Heart left ventricle (tissue), 16 donors: ENCODE measurements at regions of chr12 and their contacts with region 1.

Region 1: DNA sequence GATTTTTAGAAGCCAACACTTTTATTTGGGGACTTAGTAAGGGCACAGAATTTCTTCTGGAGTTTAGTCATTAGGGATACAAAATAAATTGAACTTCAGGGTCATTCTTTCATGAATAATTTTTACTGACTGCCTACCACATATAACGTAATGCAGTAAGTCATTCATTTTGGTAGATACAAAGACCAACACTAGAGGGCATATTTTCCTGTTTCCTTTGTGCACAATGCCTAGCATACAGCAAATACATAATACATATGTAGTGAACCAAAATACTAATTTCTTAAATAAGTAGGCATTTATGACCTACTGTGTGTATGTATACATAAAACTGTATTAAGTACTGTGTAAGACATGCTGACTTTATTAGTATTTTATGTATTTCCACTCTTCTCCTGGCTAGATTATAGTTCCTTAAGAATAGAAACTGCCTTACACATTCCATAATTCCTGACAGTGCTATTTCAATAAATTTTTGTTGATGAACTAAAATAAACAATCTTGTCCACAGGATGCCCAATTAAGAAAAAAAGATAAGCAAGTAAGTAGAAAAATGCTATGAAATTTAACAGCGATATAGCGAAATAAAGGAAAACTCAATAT is 47.9 kb downstream of the PPP1R12A start:
- DNase-seq: no peak
- ATAC-seq: peak in 2 of 4 donors; percentile 63 to 69
- H3K4me3 ChIP-seq: no peak overlapping the region
- H3K27ac ChIP-seq: no peak overlapping the region
- H3K4me1 ChIP-seq: peaks cover 0 to 90% (median 60%) of the 10 kb centered on the region in 12 donors
- H3K27me3 ChIP-seq: no peaks in the 10 kb centered on the region
- CTCF ChIP-seq: peak; percentile 33 to 66 (median 56)
- POLR2A ChIP-seq: no peak

Region 2: GRCh38 chr12:79547735-79548609 is 339.0 kb before region 1 on chr12:
- intact Hi-C with region 1: no loop called
- DNase-seq: peak in 1 of 5 donors; percentile 34
- ATAC-seq: peak in 3 of 4 donors; percentile 59 to 75 (median 73)
- H3K4me3 ChIP-seq: no peak overlapping the region
- H3K27ac ChIP-seq: peak overlapping the region in 4 of 12 donors; percentile 2 to 8 (median 6)
- H3K4me1 ChIP-seq: peaks cover 0 to 22% (median 6%) of the 10 kb centered on the region in 12 donors
- H3K27me3 ChIP-seq: no peaks in the 10 kb centered on the region
- CTCF ChIP-seq: peak; percentile 52 to 81 (median 65)
- POLR2A ChIP-seq: no peak

Region 3: DNA sequence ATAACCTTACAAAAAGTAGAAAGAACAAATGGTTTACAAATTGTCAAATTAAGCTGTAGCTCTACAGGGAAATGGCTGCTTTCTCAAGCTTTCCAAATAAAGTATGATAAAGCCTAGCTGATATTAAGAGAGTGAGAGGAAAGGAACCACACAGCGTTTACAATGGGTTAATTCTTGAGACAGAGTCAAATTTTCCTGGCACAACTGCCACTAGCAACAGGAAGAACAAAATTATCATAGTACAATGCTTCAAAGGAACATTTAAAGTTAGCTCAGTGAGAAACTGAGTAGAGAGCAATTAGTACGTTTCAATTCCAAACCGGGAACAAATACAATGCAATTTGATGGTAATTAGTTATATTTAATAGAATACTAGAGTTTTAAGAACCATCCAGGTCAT is 68.2 kb before region 1 on chr12:
- intact Hi-C with region 1: loop called in 1 of 10 experiments (anchors 5 kb)
- DNase-seq: peak in 1 of 5 donors; percentile 37
- ATAC-seq: peak; percentile 57 to 86 (median 83)
- H3K4me3 ChIP-seq: no peak overlapping the region
- H3K27ac ChIP-seq: peak overlapping the region; percentile 50 to 84 (median 70)
- H3K4me1 ChIP-seq: peaks cover 0 to 44% (median 18%) of the 10 kb centered on the region in 12 donors
- H3K27me3 ChIP-seq: no peaks in the 10 kb centered on the region
- CTCF ChIP-seq: no peak
- POLR2A ChIP-seq: no peak

Region 4: DNA sequence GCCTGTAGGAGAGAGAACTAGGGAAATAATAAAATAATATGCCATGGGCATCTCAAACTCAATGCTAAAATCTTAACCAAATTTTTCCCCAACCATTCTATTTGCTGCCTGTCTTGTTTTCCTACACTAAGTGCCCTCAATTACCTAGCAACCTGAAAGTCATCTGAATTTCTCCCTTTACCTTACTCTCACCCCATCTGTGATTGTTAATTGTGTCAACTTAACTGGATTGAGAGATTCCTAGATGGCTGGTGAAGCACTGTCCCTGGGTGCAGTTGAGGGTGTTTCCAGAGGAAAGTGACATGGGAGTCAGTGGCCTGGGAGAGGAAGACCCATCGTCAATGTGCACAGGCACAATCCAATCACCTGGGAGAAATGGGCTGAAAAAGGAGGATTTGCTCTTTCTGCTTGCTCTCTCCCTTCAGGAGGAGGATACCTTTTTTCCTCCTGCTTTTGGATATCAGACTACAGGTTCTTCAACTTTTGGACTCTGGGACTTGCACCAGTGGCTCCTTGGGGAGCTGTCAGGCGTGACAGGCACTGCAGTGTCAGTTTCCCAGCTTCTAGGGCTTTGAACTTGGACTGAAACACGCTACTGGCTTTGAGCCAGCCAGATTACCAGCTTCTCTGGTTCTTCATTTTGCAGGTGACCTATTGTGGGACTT is 52.2 kb before region 1 on chr12:
- intact Hi-C with region 1: no loop called
- DNase-seq: no peak
- ATAC-seq: peak in 2 of 4 donors; percentile 26 to 33
- H3K4me3 ChIP-seq: no peak overlapping the region
- H3K27ac ChIP-seq: no peak overlapping the region
- H3K4me1 ChIP-seq: peaks cover 0 to 50% (median 22%) of the 10 kb centered on the region in 12 donors
- H3K27me3 ChIP-seq: no peaks in the 10 kb centered on the region
- CTCF ChIP-seq: no peak
- POLR2A ChIP-seq: no peak